Right ventricle myocardium superior (tissue), 1 donor: ENCODE measurements at regions of chr1 and their contacts with region 1.

Region 1: DNA sequence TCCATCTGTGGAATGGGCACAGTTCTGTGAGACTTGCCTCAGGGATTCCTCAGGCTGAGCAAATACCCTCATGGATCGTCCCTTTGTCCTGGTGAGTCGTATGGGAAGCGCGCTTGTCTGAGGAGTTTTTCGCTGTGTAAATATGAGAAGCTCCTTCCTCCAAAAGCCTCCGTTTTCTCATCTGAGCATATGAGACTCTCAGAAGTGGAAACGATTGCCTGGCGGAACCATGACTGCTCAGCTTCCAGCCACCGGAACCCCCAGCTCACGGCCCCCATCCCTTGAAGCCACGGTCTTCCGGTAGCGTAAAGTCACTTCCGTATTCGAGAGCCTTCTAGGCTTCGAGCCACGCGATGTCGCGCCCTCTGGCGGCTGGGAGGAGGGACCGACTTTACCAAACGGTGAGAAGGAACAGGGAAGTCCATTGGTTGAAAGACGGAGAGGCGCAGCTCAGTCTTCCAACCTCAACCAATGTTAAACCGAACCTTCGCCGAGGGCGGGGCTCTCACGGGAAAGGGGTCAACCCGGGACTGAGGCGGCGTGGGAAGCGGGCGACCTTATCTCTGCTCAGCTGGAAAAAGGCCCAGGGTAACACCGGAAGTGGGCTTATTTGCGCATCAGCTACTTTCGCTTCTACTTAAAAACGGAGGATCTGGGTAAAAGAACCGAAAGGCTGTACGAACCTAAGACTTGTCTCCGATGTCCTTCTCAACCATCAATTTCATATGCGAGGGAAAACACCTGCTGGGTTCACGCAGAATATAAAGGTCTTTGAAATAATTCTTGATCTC is 46.2 kb downstream of the AZIN2 start:
- DNase-seq: peak; percentile 99
- ATAC-seq: peak; percentile 99

Region 2: DNA sequence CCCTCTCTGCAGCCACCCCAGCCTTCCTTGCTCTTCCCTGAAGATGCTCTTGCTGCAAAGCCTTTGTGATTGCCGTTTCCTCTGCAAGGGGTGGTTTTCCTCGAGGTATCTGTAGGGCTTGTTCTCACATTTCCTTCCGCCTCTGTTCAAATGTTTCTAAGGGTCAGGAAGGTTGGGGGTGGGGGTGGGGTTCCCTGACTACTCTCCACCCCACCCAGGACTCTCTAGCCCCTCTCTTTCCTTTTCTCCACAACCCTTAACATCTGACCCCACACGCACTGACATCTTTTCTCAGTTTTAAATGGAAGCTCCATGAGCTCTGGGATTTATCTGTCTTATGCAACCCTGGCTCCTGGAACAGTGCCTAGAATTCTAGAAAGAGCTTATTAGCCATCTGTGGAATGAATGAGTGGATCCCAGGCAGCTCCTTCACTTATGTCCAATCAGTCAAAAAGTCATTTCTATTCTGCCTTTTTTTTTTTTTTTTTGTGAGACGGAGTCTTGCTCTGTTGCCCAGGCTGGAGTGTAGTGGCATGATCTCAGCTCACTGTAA is 101.8 kb after region 1 on chr1:
- intact Hi-C with region 1: no loop called
- DNase-seq: no peak
- ATAC-seq: peak; percentile 95

Region 3: GRCh38 chr1:33256701-33257399 is 129.7 kb after region 1 on chr1:
- intact Hi-C with region 1: loop called (anchors 5 kb)
- DNase-seq: peak; percentile 77
- ATAC-seq: peak; percentile 59